ENCODE measurements at regions of chr6 and their contacts with region 1.

Region 1: DNA sequence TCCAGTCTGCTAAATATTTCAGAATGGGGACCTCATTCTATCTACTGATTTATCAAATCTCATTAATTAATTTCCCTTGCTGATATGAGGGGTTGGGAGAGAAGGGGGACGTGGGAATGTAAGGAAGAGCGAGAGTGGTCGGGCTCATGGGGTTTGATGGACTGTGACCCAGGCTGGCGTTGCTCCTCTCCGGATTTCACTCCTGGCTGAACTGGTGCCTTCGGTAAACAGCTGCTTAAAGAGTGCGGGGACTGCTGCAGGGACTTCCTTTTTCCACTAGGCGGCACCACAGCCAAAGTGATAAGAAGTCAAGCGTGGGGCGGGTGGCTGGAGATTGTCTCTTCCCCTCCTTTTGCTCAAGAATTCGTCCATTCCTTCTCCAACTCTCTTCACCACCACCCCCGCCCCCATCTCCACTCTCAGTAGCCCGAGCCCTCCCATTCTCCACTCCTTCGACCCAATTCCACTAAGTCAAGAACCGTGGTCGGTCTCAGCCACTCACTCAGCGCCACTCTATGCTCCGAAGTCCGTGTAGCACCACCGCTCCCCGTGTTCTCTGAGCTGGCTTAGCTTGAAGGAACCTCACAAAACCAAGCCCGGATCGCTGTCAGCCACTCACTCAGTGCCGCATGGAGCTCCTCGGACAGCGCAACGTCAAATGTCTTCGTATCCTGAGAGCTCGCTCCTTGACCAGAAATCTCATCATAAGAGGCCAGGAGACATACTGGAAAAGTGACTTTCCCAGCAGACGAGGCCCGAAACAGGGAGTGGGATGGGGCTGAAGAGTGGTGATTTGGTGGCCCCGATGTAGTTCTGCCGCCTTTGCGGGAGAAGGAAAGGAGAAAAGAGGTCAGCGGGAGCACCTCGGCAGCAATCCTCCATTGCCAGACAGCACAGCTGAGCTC is 9.7 kb downstream of the TRIM31 start:
- DNase-seq: peak; percentile 78 to 89
- ATAC-seq: peak; percentile 76 to 91 (median 83)
- H3K4me3 ChIP-seq: peak overlapping the region in 9 of 10 donors; percentile 20 to 56 (median 49)
- H3K27ac ChIP-seq: peak overlapping the region in 9 of 10 donors; percentile 33 to 83 (median 65)
- H3K4me1 ChIP-seq: peaks cover 9 to 39% (median 29%) of the 10 kb centered on the region in 9 donors
- H3K27me3 ChIP-seq: peaks cover 4 to 79% (median 47%) of the 10 kb centered on the region in 7 donors
- CTCF ChIP-seq: peak; percentile 71 to 94 (median 89)

Region 2: GRCh38 chr6:29847871-29848630 is 255.2 kb before region 1 on chr6:
- intact Hi-C with region 1: loop called in 1 of 10 experiments (anchors 10 kb)
- DNase-seq: peak; percentile 67 to 82
- ATAC-seq: peak; percentile 85 to 95 (median 90)
- H3K4me3 ChIP-seq: no peak overlapping the region
- H3K27ac ChIP-seq: no peak overlapping the region
- H3K4me1 ChIP-seq: peaks cover 0 to 14% (median 4%) of the 10 kb centered on the region in 9 donors
- H3K27me3 ChIP-seq: peaks cover 0 to 85% (median 66%) of the 10 kb centered on the region in 7 donors
- CTCF ChIP-seq: peak; percentile 82 to 98 (median 94)

Region 3: DNA sequence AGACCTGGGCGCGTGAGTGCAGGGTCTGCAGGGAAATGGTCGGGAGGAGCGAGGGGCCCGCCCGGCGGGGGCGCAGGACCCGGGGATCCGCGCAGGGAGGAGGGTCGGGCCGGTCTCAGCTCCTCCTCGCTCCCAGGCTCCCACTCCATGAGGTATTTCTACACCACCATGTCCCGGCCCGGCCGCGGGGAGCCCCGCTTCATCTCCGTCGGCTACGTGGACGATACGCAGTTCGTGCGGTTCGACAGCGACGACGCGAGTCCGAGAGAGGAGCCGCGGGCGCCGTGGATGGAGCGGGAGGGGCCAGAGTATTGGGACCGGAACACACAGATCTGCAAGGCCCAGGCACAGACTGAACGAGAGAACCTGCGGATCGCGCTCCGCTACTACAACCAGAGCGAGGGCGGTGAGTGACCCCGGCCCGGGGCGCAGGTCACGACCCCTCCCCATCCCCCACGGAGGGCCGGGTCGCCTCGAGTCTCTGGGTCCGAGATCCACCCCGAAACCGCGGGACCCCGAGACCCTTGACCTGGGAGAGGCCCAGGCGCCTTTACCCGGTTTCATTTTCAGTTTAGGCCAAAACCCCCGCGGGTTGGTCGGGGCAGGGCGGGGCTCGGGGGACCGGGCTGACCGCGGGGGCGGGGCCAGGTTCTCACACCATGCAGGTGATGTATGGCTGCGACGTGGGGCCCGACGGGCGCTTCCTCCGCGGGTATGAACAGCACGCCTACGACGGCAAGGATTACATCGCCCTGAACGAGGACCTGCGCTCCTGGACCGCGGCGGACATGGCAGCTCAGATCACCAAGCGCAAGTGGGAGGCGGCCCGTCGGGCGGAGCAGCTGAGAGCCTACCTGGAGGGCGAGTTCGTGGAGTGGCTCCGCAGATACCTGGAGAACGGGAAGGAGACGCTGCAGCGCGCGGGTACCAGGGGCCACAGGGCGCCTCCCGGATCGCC is 215.1 kb before region 1 on chr6:
- intact Hi-C with region 1: no loop called
- DNase-seq: peak; percentile 79 to 82
- ATAC-seq: peak; percentile 87 to 96 (median 92)
- H3K4me3 ChIP-seq: peak overlapping the region; percentile 52 to 89 (median 75)
- H3K27ac ChIP-seq: peak overlapping the region; percentile 35 to 96 (median 90)
- H3K4me1 ChIP-seq: peaks cover 0 to 14% (median 7%) of the 10 kb centered on the region in 9 donors
- H3K27me3 ChIP-seq: no peaks in the 10 kb centered on the region
- CTCF ChIP-seq: no peak

Region 4: DNA sequence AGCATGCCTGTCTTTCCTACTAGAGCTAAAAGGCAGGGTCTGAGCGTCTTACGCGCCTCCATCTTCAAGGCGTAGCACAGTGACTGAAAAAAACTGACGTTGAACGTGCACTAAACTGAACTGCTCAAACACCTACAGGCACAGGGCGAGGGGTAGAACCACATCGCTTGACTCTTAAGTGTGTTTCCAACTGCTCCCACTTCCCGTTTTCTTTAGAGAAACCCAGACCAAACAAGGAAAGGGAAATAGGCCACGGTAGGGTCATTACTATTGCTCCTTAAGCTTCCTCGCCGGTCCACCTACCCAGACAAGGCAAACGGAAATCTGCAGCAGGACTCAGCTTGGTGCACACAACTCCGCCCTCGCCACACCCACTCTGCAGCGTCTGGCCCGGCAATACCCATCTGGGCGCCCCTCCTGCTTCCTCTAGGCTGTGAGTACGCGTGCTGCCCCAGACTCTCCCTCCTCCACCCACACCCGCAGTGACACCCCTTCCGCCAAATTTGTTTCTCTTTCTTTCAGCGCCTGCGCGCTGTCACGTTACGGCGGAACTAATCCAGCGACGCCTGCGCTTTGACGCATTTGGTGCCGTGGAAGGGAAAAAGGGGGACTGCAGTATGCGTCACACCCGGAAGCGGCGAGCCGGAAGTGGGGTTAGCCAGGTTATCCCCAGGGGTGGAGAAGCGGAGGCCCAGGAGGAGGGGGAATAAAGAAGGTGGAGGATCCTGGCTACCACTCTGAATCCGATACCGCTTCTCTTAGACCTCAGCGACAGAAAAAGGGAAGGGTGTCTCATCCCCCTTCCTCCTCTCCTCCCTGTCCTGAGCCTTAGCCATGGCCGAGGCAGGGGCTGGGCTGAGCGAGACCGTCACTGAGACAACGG is 36.4 kb before region 1 on chr6 and contains the start of gene PPP1R11:
- intact Hi-C with region 1: loop called in 6 of 10 experiments (anchors 1 to 5 kb)
- DNase-seq: peak; percentile 95 to 99
- ATAC-seq: peak; percentile 98 to 99 (median 99)
- H3K4me3 ChIP-seq: peak within 1 kb of the TSS; percentile 42 to 91 (median 74)
- H3K27ac ChIP-seq: peak within 1 kb of the TSS; percentile 63 to 96 (median 90)
- H3K4me1 ChIP-seq: peaks cover 3 to 53% (median 46%) of the 10 kb centered on the region in 9 donors
- H3K27me3 ChIP-seq: peaks cover 0 to 16% (median 9%) of the 10 kb centered on the region in 7 donors
- CTCF ChIP-seq: no peak
- total RNA-seq, gene PPP1R11: 38.6 to 56.5 (median 46.8) TPM

Region 5: GRCh38 chr6:30130887-30131862 is 28.0 kb after region 1 on chr6:
- intact Hi-C with region 1: loop called in 7 of 10 experiments (anchors 1 to 2 kb)
- DNase-seq: peak in 1 of 2 donors; percentile 71
- ATAC-seq: peak; percentile 65 to 91 (median 85)
- H3K4me3 ChIP-seq: no peak overlapping the region
- H3K27ac ChIP-seq: no peak overlapping the region
- H3K4me1 ChIP-seq: peaks cover 0 to 17% (median 10%) of the 10 kb centered on the region in 9 donors
- H3K27me3 ChIP-seq: peaks cover 10 to 97% (median 83%) of the 10 kb centered on the region in 7 donors
- CTCF ChIP-seq: peak; percentile 83 to 100 (median 97)

Region 6: DNA sequence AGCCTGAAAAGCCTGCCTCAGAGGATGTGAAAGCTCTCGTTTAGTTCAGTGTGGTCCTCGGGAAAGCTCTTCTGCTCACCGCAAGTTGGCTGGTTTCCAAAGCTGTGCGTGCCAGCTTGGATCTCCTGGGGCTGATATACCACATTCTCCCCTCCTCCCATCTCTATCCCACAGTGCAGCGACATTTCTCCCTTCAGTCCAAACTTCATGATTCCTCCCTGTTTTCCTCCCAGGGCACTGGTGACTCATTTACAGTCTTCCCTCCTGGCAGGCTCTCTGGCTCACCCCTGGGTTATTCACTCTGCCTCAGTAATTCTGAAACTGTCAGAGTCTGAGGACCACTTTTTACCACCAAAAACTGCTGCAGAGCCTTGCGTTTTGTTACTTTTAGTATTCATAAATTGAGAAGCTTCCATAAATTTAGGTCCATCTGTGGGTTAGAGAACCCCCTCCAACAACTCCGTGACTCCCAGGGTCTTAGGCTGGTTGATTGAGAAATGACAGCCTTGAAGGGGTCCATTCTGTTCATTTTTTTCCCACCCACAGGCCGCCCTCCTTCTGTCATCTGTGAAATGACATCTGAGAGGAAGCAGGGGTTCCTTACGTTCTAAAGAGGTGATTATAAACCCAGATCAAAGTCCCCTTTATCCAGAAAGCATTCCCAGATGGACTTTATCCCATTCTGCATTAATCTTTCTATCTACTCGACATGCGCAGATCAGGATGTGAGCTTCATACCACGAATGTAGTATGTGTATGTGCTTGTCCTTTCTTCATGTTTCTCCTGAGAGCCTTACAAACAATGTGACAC is 51.7 kb after region 1 on chr6:
- intact Hi-C with region 1: no loop called
- DNase-seq: no peak
- ATAC-seq: peak in 2 of 8 donors; percentile 11 to 51
- H3K4me3 ChIP-seq: no peak overlapping the region
- H3K27ac ChIP-seq: no peak overlapping the region
- H3K4me1 ChIP-seq: peaks cover 0 to 24% (median 5%) of the 10 kb centered on the region in 9 donors
- H3K27me3 ChIP-seq: peaks cover 0 to 20% (median 0%) of the 10 kb centered on the region in 7 donors
- CTCF ChIP-seq: no peak

Region 7: DNA sequence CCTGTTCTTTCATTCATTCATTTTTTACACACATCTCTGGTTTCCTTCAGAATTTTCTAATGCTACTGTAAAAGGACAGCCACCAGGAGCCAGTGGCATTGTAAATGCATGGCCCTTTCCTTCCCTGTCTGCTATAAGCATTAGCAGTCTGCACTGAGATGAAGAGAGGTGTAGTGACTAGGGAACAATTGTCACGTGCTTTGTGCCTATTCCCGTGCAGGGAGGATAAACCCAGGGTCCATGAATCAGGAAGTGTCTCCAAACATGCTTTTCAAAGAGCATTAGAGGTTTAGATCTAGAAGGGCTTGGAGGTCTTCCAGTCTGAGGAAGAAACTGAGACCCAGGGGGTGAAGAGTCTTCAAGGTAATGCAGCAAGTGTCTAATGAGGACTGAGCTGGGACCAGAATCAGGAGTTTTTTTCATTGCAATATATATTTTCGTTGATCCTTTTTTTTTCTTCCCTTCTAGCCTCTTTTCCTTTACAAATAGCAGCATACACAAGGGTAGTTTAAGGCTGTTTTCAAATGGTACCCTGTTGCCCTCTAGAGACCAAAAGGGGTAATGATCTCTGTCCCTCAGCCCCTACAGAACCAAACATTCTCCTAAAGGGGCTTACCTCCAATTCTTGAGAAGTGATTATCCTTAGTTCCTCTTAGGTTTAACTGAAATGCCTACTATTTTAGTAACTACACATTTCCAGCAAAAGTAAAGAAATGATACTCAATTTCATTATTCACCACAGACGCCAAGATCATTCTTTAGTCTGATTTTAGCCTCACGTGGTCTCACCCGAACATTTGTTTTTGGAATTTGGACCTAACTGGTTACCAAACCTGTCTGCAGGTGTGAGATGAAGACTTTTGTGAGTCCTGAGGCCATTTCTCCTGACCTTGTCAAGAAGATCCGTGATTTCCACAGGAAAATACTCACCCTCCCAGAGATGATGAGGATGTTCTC is 66.7 kb after region 1 on chr6:
- intact Hi-C with region 1: loop called in 4 of 10 experiments (anchors 5 kb)
- DNase-seq: no peak
- ATAC-seq: peak in 5 of 8 donors; percentile 69 to 77 (median 72)
- H3K4me3 ChIP-seq: no peak overlapping the region
- H3K27ac ChIP-seq: no peak overlapping the region
- H3K4me1 ChIP-seq: peaks cover 0 to 10% (median 9%) of the 10 kb centered on the region in 9 donors
- H3K27me3 ChIP-seq: peaks cover 7 to 86% (median 69%) of the 10 kb centered on the region in 7 donors
- CTCF ChIP-seq: peak; percentile 45 to 82 (median 73)

Region 8: GRCh38 chr6:30396833-30397479 is 293.7 kb after region 1 on chr6:
- intact Hi-C with region 1: loop called in 1 of 10 experiments (anchors 10 kb)
- DNase-seq: peak; percentile 65 to 85
- ATAC-seq: peak; percentile 90 to 97 (median 92)
- H3K4me3 ChIP-seq: no peak overlapping the region
- H3K27ac ChIP-seq: no peak overlapping the region
- H3K4me1 ChIP-seq: peaks cover 0 to 6% (median 0%) of the 10 kb centered on the region in 9 donors
- H3K27me3 ChIP-seq: peaks cover 0 to 65% (median 44%) of the 10 kb centered on the region in 7 donors
- CTCF ChIP-seq: peak; percentile 38 to 90 (median 79)

Measured in heart right ventricle (tissue), 16 donors.